GM12878 (cell line): ENCODE measurements at regions of chr20 and their contacts with region 1.

Region 1: DNA sequence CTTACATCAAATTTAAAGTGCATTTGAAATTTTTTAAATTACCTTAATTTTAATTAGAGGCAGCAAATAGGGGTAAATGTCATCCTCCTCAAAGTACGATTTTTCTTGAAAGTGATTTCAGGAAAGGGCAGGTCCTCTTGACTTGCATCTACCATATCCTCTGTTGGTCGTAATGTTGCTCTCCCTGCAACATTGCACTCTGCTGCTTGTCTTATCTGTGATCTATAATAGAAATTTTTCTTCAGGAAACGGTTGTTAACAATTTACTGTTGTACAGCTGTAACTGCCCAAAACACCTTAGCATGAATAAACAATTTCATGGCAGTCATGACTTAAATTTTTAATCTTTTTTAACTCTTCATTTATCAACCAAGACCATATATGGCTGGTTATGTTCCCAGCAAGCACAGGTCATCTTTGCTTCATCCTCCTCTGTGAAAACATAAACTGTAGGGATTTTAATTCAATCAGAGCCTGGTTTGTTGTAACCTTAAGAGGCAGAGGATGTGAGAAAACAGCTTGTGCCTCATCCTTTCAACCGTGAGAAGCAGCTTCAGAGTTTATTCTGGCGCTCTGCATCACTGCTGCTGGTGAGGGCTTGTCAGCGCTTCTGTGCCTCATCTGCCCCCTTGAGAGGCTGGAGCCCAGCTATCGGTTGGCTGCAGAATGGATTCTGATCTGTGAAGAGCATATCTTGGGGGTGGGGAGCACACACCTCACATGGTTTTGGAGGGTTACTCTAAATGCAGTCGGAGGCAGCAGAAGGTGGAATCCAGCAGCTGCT is 56.0 kb downstream of the CTNNBL1 start:
- DNase-seq: no peak
- ATAC-seq: no peak
- H3K4me3 ChIP-seq: no peak overlapping the region
- H3K27ac ChIP-seq: no peak overlapping the region
- H3K4me1 ChIP-seq: no peaks in the 10 kb centered on the region
- H3K27me3 ChIP-seq: no peaks in the 10 kb centered on the region
- CTCF ChIP-seq: no peak
- EP300 ChIP-seq: no peak
- POLR2A ChIP-seq: no peak
- RAD21 ChIP-seq: 0 out of 2 replicates have a peak, but pooled peaks have one; percentile 5

Region 2: GRCh38 chr20:37020636-37021035 is 729.2 kb before region 1 on chr20:
- CTCF ChIA-PET with region 1: no interaction called
- POLR2A ChIA-PET with region 1: no interaction called
- RAD21 ChIA-PET with region 1: no interaction called
- SMC1A ChIA-PET with region 1: no interaction called
- in situ Hi-C with region 1: no loop called
- intact Hi-C with region 1: loop called (anchors 5 kb)
- DNase-seq: no peak
- ATAC-seq: no peak
- H3K4me3 ChIP-seq: no peak overlapping the region
- H3K27ac ChIP-seq: no peak overlapping the region
- H3K4me1 ChIP-seq: no peaks in the 10 kb centered on the region
- H3K27me3 ChIP-seq: no peaks in the 10 kb centered on the region
- CTCF ChIP-seq: no peak
- EP300 ChIP-seq: no peak
- POLR2A ChIP-seq: no peak
- RAD21 ChIP-seq: no peak